CD4-positive, alpha-beta T cell (primary cell): ENCODE measurements at regions of chr11 and their contacts with region 1.

Region 1: GRCh38 chr11:64317957-64318693 is at the start of gene PRDX5:
- DNase-seq: peak; percentile 88 to 99 (median 94)
- ATAC-seq: peak; percentile 72
- H3K4me3 ChIP-seq: peak within 1 kb of the TSS; percentile 96
- H3K4me3 Mint-ChIP-seq: peak within 1 kb of the TSS; percentile 92
- H3K27ac ChIP-seq: peak within 1 kb of the TSS; percentile 93 to 99
- H3K27ac Mint-ChIP-seq: peak within 1 kb of the TSS; percentile 98
- H3K4me1 ChIP-seq: peaks cover 34% of the 10 kb centered on the region
- H3K4me1 Mint-ChIP-seq: peaks cover 40% of the 10 kb centered on the region
- H3K27me3 ChIP-seq: no peaks in the 10 kb centered on the region
- H3K27me3 Mint-ChIP-seq: no peaks in the 10 kb centered on the region
- CTCF ChIP-seq: peak; percentile 40
- total RNA-seq, gene PRDX5: 31.7 to 33.1 TPM

Region 2: DNA sequence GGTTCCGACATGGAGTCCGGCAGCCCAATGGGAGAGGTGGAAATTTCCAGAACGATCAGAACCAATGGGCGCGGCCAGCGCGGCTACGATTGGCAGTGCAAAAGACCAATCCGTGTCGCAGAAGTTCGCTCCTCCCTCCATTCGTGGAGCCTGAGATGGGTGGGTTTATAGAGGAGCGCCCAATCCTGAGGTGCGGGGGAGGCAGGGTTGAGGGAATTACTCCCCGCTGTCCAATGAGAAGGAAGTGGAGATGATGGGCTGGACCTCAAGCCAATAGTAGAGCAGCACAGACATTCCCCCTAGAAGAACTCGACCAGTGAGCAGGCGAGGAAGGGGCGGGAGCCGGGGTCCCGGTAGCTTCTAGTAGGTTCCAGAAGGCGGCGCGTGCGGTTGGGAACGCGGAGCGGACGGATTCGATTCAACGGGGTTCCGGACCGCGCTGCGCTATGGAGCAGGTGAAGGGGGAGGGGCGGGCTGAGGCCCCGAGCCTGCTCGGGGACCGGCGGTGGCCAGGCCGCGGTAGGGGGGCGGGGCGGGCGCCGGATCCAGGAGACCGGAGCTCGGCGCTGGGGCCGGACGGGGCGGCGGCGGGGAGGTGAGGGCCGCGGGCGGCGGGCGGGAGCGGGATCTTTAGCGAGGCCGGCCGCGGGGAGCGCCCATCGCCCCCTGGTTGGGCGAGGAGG is 132.2 kb before region 1 on chr11 and contains the start of gene STIP1:
- CTCF ChIA-PET with region 1: interaction called, 4 read pairs
- POLR2A ChIA-PET with region 1: interaction called, 20 read pairs
- intact Hi-C with region 1: loop called in 1 of 2 experiments (anchors 1 kb)
- DNase-seq: peak in 13 of 14 experiments; percentile 94 to 100 (median 97)
- ATAC-seq: peak; percentile 87
- H3K4me3 ChIP-seq: peak within 1 kb of the TSS; percentile 80
- H3K4me3 Mint-ChIP-seq: peak within 1 kb of the TSS; percentile 99
- H3K27ac ChIP-seq: peak within 1 kb of the TSS; percentile 47 to 57
- H3K27ac Mint-ChIP-seq: no peak within 1 kb of the TSS
- H3K4me1 ChIP-seq: peaks cover 41% of the 10 kb centered on the region
- H3K4me1 Mint-ChIP-seq: peaks cover 45% of the 10 kb centered on the region
- H3K27me3 ChIP-seq: no peaks in the 10 kb centered on the region
- H3K27me3 Mint-ChIP-seq: no peaks in the 10 kb centered on the region
- CTCF ChIP-seq: peak; percentile 15
- total RNA-seq, gene STIP1: 29.0 to 37.5 TPM

Region 3: GRCh38 chr11:64240394-64241174 is 77.5 kb before region 1 on chr11 and contains the start of gene FKBP2:
- CTCF ChIA-PET with region 1: no interaction called
- POLR2A ChIA-PET with region 1: interaction called, 26 read pairs
- intact Hi-C with region 1: no loop called
- DNase-seq: peak; percentile 92 to 100 (median 97)
- ATAC-seq: peak; percentile 66
- H3K4me3 ChIP-seq: peak within 1 kb of the TSS; percentile 80
- H3K4me3 Mint-ChIP-seq: peak within 1 kb of the TSS; percentile 98
- H3K27ac ChIP-seq: peak within 1 kb of the TSS; percentile 97 to 100
- H3K27ac Mint-ChIP-seq: peak within 1 kb of the TSS; percentile 100
- H3K4me1 ChIP-seq: peaks cover 59% of the 10 kb centered on the region
- H3K4me1 Mint-ChIP-seq: peaks cover 40% of the 10 kb centered on the region
- H3K27me3 ChIP-seq: no peaks in the 10 kb centered on the region
- H3K27me3 Mint-ChIP-seq: no peaks in the 10 kb centered on the region
- CTCF ChIP-seq: no peak
- total RNA-seq, gene FKBP2: 11.2 to 14.6 TPM

Region 4: GRCh38 chr11:64284048-64284961 is 33.8 kb before region 1 on chr11 and contains the start of gene BAD:
- CTCF ChIA-PET with region 1: interaction called, 3 read pairs
- POLR2A ChIA-PET with region 1: interaction called, 22 read pairs
- intact Hi-C with region 1: loop called in 1 of 2 experiments (anchors 1 kb)
- DNase-seq: peak; percentile 87 to 95 (median 91)
- ATAC-seq: peak; percentile 77
- H3K4me3 ChIP-seq: peak within 1 kb of the TSS; percentile 97
- H3K4me3 Mint-ChIP-seq: peak within 1 kb of the TSS; percentile 93
- H3K27ac ChIP-seq: peak within 1 kb of the TSS; percentile 99 to 100
- H3K27ac Mint-ChIP-seq: peak within 1 kb of the TSS; percentile 97
- H3K4me1 ChIP-seq: peaks cover 37% of the 10 kb centered on the region
- H3K4me1 Mint-ChIP-seq: peaks cover 21% of the 10 kb centered on the region
- H3K27me3 ChIP-seq: no peaks in the 10 kb centered on the region
- H3K27me3 Mint-ChIP-seq: no peaks in the 10 kb centered on the region
- CTCF ChIP-seq: no peak
- total RNA-seq, gene BAD: 22.5 to 23.0 TPM

Region 5: GRCh38 chr11:64341851-64342791 is 24.0 kb after region 1 on chr11:
- CTCF ChIA-PET with region 1: interaction called, 34 read pairs
- POLR2A ChIA-PET with region 1: interaction called, 103 read pairs
- intact Hi-C with region 1: loop called (anchors 1 kb)
- DNase-seq: peak; percentile 78 to 94 (median 91)
- ATAC-seq: peak; percentile 68
- H3K4me3 ChIP-seq: peak overlapping the region; percentile 7
- H3K4me3 Mint-ChIP-seq: peak overlapping the region; percentile 34
- H3K27ac ChIP-seq: peak overlapping the region in 1 of 2 donors; percentile 50
- H3K27ac Mint-ChIP-seq: no peak overlapping the region
- H3K4me1 ChIP-seq: peaks cover 55% of the 10 kb centered on the region
- H3K4me1 Mint-ChIP-seq: peaks cover 54% of the 10 kb centered on the region
- H3K27me3 ChIP-seq: no peaks in the 10 kb centered on the region
- H3K27me3 Mint-ChIP-seq: no peaks in the 10 kb centered on the region
- CTCF ChIP-seq: no peak

Region 6: GRCh38 chr11:64652586-64653387 is 334.7 kb after region 1 on chr11:
- CTCF ChIA-PET with region 1: interaction called, 4 read pairs
- POLR2A ChIA-PET with region 1: no interaction called
- intact Hi-C with region 1: loop called in 1 of 2 experiments (anchors 1 kb)
- DNase-seq: peak; percentile 51 to 80 (median 68)
- ATAC-seq: peak; percentile 87
- H3K4me3 ChIP-seq: no peak overlapping the region
- H3K4me3 Mint-ChIP-seq: no peak overlapping the region
- H3K27ac ChIP-seq: no peak overlapping the region
- H3K27ac Mint-ChIP-seq: no peak overlapping the region
- H3K4me1 ChIP-seq: peaks cover 14% of the 10 kb centered on the region
- H3K4me1 Mint-ChIP-seq: no peaks in the 10 kb centered on the region
- H3K27me3 ChIP-seq: peaks cover 0 to 4% of the 10 kb centered on the region in 2 experiments
- H3K27me3 Mint-ChIP-seq: peaks cover 13% of the 10 kb centered on the region
- CTCF ChIP-seq: peak; percentile 70